ENCODE measurements at regions of chr11 and their contacts with region 1.

Region 1: DNA sequence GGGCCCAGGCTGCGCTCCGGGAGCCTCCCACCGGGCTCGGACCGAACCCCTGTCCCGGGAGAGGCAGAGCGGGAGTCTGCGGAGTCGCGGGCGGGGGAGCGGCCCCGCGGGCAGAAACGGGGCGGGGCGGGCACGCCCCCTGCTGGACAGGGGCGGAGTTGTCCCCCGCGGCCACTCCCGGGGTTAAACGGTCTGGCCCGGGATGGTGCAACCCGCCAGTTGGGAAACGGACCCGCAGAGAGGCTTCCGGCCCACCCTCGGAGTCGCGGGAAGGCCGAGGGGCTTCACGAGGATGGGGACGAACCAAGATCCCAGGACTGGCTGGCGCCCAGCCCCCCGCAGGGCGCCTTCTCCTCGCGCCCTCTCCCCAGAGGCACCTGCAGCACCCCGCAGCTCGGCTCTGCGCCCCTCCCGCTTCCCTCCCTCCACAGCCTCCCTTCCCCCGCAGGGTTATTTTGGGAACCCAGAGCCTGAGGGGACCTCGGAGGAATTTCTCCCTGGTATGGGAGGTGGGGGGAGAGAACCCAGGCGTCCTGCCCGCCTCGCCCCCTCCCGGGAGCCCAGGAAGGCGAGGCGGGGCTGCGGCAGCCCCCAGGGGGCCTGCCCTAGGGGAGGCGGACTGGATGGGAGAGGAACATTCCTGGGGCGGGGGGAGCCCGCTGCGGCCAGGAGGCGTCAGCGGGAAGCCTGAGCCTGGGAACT is 902 bp downstream of the RASGRP2 start:
- DNase-seq: no peak
- H3K4me3 ChIP-seq: peak overlapping the region; percentile 50
- CTCF ChIP-seq: peak; percentile 81

Region 2: DNA sequence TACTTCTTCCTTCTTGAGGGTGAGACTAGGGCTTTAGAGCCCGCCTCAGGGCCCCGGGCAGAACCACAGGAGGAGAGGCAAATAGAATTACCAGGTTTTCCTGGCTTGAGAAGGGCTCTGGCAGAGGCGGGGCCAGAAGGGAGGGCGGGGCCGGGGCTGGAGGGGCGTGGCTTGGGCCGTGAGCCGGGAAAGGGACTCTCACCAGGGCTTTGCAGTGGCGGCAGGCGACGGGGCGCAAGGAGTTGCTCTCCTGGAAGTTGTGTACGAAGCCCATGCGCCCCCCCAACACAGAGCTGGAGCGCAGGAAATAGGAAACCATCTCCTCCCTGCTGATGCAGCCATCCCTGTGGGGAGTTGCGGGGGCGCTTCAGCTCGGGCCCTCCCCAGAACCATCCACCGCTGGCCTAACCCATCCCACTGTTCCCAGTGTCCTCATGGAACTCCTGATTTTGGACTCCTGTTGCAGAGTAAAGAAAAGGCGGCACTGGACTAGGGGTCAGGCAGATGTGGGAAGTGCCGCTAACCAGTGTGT is 13.1 kb before region 1 on chr11:
- CTCF ChIA-PET with region 1: interaction called, 19 read pairs
- POLR2A ChIA-PET with region 1: no interaction called
- DNase-seq: no peak
- H3K4me3 ChIP-seq: no peak overlapping the region
- CTCF ChIP-seq: no peak

Region 3: DNA sequence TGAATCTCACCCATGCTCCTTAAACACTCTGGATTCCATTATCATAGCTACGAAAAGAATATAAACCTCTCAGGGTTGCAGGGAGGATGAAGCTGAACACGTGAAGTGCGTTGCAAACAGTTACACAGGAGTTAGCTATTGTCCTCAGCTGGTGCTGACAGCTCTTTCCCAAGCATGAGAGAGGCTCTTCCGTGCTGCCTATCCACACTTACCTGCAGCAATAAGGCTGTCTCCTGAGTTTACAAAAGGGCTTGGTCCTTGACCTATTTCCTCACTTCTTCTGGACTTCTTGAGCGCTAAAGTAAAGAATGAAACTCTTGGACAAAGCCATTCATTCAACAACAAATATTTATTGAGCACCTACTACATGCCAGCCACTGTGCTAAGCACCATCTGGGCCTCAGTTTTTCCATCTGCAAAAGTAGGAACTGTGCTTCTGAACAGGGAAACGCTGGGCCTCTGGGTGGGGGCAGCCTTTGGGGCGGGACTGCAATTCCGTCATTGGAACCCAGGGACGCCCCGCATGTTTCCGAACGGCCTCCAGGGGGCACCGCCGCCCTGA is 270.2 kb after region 1 on chr11:
- CTCF ChIA-PET with region 1: no interaction called
- POLR2A ChIA-PET with region 1: no interaction called
- DNase-seq: peak; percentile 21
- H3K4me3 ChIP-seq: peak overlapping the region; percentile 87
- CTCF ChIP-seq: peak; percentile 96

Measured in AG04449 (cell line).